ENCODE measurements at regions of chr6 and their contacts with region 1.

Region 1: DNA sequence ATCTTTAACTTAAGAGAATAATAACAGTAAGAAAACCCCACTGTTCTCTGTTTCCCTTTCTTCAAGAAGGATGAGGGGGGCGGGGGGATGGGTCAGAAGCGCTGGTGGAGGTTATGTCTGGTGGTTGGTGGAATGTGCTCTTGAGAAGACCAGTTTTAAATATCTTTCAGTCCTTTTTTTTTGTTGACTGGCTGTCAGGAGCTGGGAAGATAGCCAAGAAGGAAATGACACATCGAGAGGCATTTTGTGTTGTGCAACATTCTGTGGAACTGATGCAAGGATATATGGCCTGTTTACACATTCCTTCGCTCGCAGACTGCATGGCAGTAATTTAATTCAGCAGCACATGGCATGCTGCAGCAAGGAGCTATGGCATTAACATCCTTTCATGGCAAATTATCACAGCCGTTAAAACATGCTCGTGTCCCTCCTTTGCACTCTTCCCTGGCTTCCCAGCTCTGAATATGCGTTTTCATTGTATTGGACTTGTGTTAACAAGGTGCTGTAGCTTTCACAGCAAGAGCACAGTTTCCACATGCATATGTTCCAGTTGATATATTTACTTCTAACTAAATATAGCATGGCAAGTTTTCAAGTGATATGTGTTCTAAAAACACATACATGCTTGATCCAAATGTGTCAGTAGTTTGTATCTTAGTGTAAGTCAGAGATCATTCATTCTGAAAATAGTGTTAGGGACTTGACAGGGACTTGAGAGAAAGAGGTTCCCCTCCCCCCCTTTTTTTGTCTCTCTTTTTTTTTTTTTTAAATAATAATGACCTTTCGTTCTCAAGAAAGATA is 68.2 kb upstream of the SUPT3H start:
- DNase-seq: peak; percentile 99
- H3K4me3 ChIP-seq: peak overlapping the region in 1 of 3 experiments; percentile 5
- H3K27ac ChIP-seq: peak overlapping the region; percentile 68
- H3K4me1 ChIP-seq: peaks cover 33% of the 10 kb centered on the region
- H3K27me3 ChIP-seq: no peaks in the 10 kb centered on the region
- CTCF ChIP-seq: no peak
- POLR2A ChIP-seq: no peak

Region 2: DNA sequence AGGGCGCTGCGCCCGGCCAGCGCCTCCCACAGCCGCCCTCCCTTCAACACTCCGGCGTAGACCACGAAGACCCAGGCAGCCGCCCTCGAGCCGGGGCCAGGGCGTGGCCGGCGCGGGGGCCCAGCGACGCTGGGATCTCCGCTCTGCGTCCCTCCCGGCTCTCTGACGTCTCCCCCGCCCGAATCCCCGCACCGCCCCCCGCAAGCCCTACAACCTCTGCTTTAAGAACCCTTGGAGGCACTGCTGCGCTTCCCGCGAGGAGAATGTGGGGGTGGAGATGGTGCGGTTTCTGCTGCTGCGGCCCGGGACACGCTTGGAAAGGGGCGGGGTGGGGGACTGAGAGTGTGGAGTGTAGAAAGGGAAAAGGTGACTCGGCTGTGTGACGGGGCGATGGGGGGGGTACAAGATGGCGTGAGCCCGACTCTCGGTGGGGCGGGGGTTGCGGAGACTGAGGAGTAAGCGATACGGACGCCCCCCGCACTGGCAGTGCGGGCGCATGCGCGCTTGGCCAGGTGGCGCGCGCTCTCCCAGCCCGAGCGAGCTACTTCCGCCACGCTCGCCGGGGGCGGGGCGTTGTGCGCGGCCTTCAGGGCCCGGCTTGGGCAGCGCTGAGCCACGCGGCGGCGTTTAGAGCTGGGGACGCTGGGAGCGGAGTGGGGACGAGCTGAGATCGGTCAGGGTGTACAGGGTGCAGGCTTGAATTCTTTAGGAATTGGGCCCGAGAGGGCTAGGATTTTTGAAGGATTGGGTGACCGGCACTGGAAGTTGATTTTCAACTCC is 68.2 kb before region 1 on chr6 and contains the start of gene SUPT3H:
- CTCF ChIA-PET with region 1: interaction called, 4 read pairs
- POLR2A ChIA-PET with region 1: no interaction called
- dilution Hi-C with region 1: no loop called
- intact Hi-C with region 1: loop called (anchors 1 kb)
- DNase-seq: peak; percentile 94
- H3K4me3 ChIP-seq: peak within 1 kb of the TSS; percentile 76 to 92 (median 79)
- H3K27ac ChIP-seq: peak within 1 kb of the TSS; percentile 91
- H3K4me1 ChIP-seq: peaks cover 8% of the 10 kb centered on the region
- H3K27me3 ChIP-seq: no peaks in the 10 kb centered on the region
- CTCF ChIP-seq: peak in 1 of 2 donors; percentile 26
- POLR2A ChIP-seq: peak; percentile 87
- total RNA-seq, gene SUPT3H: 8.4 and 9.8 TPM in 2 replicates

Region 3: DNA sequence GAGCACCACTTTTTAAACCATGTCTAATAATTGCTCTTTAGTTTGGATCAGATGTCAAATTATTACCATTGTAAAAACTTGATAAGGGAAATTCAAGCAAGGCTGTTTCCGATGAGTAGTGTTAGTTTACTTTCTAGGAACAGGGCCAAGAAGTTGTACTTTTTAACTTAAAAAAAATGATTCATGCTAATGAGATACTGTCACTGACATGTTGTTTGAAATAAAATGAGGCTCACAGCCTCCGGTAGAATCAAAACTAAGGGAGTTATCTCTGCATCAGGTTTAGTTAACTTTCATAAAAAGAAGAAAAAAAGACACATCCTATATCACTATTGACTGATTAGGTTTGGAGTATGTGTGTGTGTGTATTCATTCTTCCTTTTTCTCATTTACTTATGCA is 13.0 kb before region 1 on chr6:
- CTCF ChIA-PET with region 1: interaction called, 9 read pairs
- POLR2A ChIA-PET with region 1: no interaction called
- dilution Hi-C with region 1: no loop called
- intact Hi-C with region 1: loop called (anchors 1 kb)
- DNase-seq: peak; percentile 82
- H3K4me3 ChIP-seq: no peak overlapping the region
- H3K27ac ChIP-seq: no peak overlapping the region
- H3K4me1 ChIP-seq: peaks cover 37% of the 10 kb centered on the region
- H3K27me3 ChIP-seq: peaks cover 12 to 14% of the 10 kb centered on the region in 2 experiments
- CTCF ChIP-seq: no peak
- POLR2A ChIP-seq: peak; percentile 29

Region 4: GRCh38 chr6:45479834-45480751 is 34.1 kb after region 1 on chr6:
- CTCF ChIA-PET with region 1: interaction called, 6 read pairs
- POLR2A ChIA-PET with region 1: no interaction called
- dilution Hi-C with region 1: no loop called
- intact Hi-C with region 1: loop called (anchors 1 kb)
- DNase-seq: peak; percentile 71
- H3K4me3 ChIP-seq: no peak overlapping the region
- H3K27ac ChIP-seq: no peak overlapping the region
- H3K4me1 ChIP-seq: peaks cover 23% of the 10 kb centered on the region
- H3K27me3 ChIP-seq: no peaks in the 10 kb centered on the region
- CTCF ChIP-seq: no peak
- POLR2A ChIP-seq: no peak

Region 5: GRCh38 chr6:45650524-45651135 is 204.7 kb after region 1 on chr6:
- CTCF ChIA-PET with region 1: no interaction called
- POLR2A ChIA-PET with region 1: no interaction called
- dilution Hi-C with region 1: no loop called
- intact Hi-C with region 1: loop called (anchors 1 kb)
- DNase-seq: peak; percentile 89
- H3K4me3 ChIP-seq: no peak overlapping the region
- H3K27ac ChIP-seq: peak overlapping the region; percentile 26
- H3K4me1 ChIP-seq: peaks cover 41% of the 10 kb centered on the region
- H3K27me3 ChIP-seq: no peaks in the 10 kb centered on the region
- CTCF ChIP-seq: no peak
- POLR2A ChIP-seq: peak; percentile 64

Measured in endothelial cell of umbilical vein (primary cell).